Dendritic cell treated with granulocyte-macrophage colony-stimulating factor and Interleukin-4, amounts not matched to agents 40 ng/mL and 50 ng/mL, for 4 days (primary cell): ENCODE measurements at regions of chr21 and their contacts with region 1.

Region 1: DNA sequence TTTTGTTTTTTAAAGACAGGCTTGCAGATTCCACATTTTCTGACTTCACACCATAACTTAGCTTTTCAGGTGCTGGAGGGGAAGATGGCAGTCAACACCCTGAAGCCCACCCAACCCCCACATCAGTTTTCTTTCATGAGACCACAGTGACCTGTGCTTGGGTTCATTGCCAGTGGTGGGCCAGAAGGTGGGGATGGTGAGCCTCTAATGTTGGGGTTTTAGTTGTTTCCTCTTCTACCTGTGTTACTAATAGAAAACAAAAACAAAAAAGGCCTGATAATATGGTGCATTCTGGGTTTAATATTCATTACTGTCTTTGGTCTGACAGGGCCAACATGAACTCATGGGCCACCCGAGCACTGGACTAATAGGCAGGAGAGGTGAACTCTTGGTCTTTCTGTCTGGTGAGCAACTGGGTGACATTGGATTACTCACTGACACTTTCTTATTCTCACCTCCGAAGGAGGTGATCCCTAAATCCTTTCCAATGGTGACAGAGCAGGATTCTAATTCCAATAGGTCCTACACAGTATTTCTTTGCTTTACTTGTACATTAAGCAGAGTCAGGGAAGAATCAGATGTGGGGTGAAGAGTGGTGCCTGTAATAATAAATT is 132.8 kb downstream of the CLIC6 start:
- H3K4me3 Mint-ChIP-seq: no peak overlapping the region
- H3K27ac Mint-ChIP-seq: peak overlapping the region; percentile 32
- H3K4me1 Mint-ChIP-seq: peaks cover 53% of the 10 kb centered on the region
- H3K27me3 Mint-ChIP-seq: no peaks in the 10 kb centered on the region

Region 2: GRCh38 chr21:34836103-34836932 is 34.7 kb after region 1 on chr21:
- intact Hi-C with region 1: loop called (anchors 5 kb)
- H3K4me3 Mint-ChIP-seq: no peak overlapping the region
- H3K27ac Mint-ChIP-seq: peak overlapping the region; percentile 69
- H3K4me1 Mint-ChIP-seq: peaks cover 74% of the 10 kb centered on the region
- H3K27me3 Mint-ChIP-seq: no peaks in the 10 kb centered on the region

Region 3: DNA sequence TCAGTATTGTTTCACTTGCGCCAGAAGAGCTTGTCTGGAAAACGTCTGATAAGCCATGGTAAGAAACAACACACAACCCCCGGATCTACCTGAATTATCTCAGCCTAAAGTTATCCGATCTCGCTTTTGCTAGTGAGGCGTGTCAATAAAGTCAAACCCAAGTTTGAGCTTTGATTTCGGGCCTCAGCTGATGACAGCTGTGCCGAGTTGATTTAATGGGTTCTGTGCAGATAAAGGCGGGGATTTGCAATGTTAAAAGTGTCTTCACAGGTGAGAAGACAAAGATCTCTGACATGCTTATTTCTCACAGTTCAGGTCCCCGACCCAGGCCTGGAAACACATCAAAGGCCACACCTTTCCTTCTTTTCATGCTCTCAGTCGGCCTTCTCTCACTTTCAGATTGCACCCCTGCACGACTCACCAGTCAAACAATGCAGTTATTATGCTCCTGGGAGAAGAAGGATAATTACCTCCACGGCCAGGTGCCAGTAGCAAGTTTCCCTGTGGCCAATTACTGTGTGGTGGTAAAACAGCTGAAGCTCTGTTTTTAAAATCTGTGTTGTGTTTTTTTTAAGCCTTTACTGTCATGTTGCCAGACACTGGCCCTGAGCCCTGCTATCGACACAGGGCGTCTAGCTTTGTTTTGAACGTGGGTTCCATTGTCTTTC is 492.7 kb after region 1 on chr21:
- intact Hi-C with region 1: no loop called
- H3K4me3 Mint-ChIP-seq: no peak overlapping the region
- H3K27ac Mint-ChIP-seq: no peak overlapping the region
- H3K4me1 Mint-ChIP-seq: peaks cover 31% of the 10 kb centered on the region
- H3K27me3 Mint-ChIP-seq: no peaks in the 10 kb centered on the region